HepG2 (cell line): ENCODE measurements at regions of chr5 and their contacts with region 1.

Region 1: DNA sequence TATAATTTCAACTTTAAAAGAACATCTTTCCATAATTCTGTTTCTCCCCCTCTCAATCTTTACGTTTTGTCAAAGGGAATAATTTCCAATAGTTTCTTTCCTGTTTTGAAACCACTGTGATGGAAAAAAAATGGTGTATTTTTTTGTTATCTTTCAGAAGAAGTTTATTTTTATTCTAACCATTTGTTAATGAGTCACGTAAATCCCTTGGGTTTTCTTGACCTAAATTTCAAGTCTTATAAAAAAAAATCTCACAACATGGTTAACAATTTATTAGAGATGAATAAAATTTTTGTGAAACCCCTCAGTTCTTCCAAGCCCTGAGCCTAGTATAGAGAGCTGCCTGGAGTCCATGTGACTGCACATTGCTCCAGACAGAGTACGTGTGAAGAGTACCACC is 106.1 kb upstream of the FBXL17 start:
- DNase-seq: no peak
- ATAC-seq: no peak
- H3K4me3 ChIP-seq: no peak overlapping the region
- H3K27ac ChIP-seq: no peak overlapping the region
- H3K4me1 ChIP-seq: no peaks in the 10 kb centered on the region
- H3K27me3 ChIP-seq: no peaks in the 10 kb centered on the region
- CTCF ChIP-seq: no peak
- EP300 ChIP-seq: no peak
- POLR2A ChIP-seq: no peak
- RAD21 ChIP-seq: no peak

Region 2: DNA sequence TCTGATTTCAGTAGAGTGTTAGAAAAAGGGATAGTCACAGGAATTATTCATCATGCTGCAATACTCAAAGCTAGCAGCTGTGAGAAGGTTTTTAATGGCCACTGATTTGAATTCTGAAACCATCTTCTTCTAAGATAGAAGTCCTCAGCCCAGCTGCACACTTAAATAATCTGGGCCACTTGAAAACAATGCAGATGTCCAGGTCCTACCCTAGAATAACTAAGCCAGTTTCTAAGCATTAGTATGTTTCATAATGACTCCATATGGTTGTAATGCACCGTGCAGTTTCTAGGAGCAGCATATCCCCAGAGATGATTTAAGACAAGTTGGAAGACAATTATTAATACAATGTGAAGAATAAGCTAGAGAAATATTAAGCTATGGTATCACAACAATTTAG is 53.9 kb after region 1 on chr5:
- CTCF ChIA-PET with region 1: no interaction called
- POLR2A ChIA-PET with region 1: no interaction called
- in situ Hi-C with region 1: no loop called
- intact Hi-C with region 1: loop called (anchors 2 kb)
- DNase-seq: no peak
- ATAC-seq: no peak
- H3K4me3 ChIP-seq: no peak overlapping the region
- H3K27ac ChIP-seq: no peak overlapping the region
- H3K4me1 ChIP-seq: no peaks in the 10 kb centered on the region
- H3K27me3 ChIP-seq: no peaks in the 10 kb centered on the region
- CTCF ChIP-seq: no peak
- EP300 ChIP-seq: no peak
- POLR2A ChIP-seq: no peak
- RAD21 ChIP-seq: no peak